H1 (cell line): ENCODE measurements at regions of chr11 and their contacts with region 1.

Region 1: GRCh38 chr11:113553235-113553634 is 78.0 kb upstream of the DRD2 start:
- DNase-seq: peak in 1 of 2 experiments; percentile 49
- H3K4me3 ChIP-seq: no peak overlapping the region
- H3K27ac ChIP-seq: no peak overlapping the region
- H3K4me1 ChIP-seq: peaks cover 0 to 7% (median 5%) of the 10 kb centered on the region in 4 experiments; a peak in 3 of 7 replicates
- H3K27me3 ChIP-seq: no peaks in the 10 kb centered on the region
- CTCF ChIP-seq: no peak
- EP300 ChIP-seq: no peak
- POLR2A ChIP-seq: no peak
- RAD21 ChIP-seq: no peak

Region 2: GRCh38 chr11:113392236-113392921 is 160.9 kb before region 1 on chr11:
- CTCF ChIA-PET with region 1: no interaction called
- POLR2A ChIA-PET with region 1: no interaction called
- DNase-seq: no peak
- H3K4me3 ChIP-seq: no peak overlapping the region
- H3K27ac ChIP-seq: no peak overlapping the region
- H3K4me1 ChIP-seq: peaks cover 1 to 4% (median 3%) of the 10 kb centered on the region in 4 experiments; a peak in 5 of 7 replicates
- H3K27me3 ChIP-seq: no peaks in the 10 kb centered on the region; a peak in 1 of 7 replicates
- CTCF ChIP-seq: no peak
- EP300 ChIP-seq: no peak
- POLR2A ChIP-seq: no peak
- RAD21 ChIP-seq: no peak

Region 3: GRCh38 chr11:113474362-113475159 is 78.7 kb before region 1 on chr11:
- CTCF ChIA-PET with region 1: no interaction called
- POLR2A ChIA-PET with region 1: no interaction called
- DNase-seq: peak; percentile 79 to 98
- H3K4me3 ChIP-seq: peak overlapping the region; percentile 43 to 61 (median 49)
- H3K27ac ChIP-seq: no peak overlapping the region
- H3K4me1 ChIP-seq: peaks cover 0 to 9% (median 3%) of the 10 kb centered on the region in 4 experiments; a peak in 6 of 7 replicates
- H3K27me3 ChIP-seq: peaks cover 7 to 29% (median 22%) of the 10 kb centered on the region in 4 experiments
- CTCF ChIP-seq: no peak
- EP300 ChIP-seq: no peak
- POLR2A ChIP-seq: no peak
- RAD21 ChIP-seq: peak in 1 of 2 experiments; percentile 18; a peak in 1 of 4 replicates

Region 4: DNA sequence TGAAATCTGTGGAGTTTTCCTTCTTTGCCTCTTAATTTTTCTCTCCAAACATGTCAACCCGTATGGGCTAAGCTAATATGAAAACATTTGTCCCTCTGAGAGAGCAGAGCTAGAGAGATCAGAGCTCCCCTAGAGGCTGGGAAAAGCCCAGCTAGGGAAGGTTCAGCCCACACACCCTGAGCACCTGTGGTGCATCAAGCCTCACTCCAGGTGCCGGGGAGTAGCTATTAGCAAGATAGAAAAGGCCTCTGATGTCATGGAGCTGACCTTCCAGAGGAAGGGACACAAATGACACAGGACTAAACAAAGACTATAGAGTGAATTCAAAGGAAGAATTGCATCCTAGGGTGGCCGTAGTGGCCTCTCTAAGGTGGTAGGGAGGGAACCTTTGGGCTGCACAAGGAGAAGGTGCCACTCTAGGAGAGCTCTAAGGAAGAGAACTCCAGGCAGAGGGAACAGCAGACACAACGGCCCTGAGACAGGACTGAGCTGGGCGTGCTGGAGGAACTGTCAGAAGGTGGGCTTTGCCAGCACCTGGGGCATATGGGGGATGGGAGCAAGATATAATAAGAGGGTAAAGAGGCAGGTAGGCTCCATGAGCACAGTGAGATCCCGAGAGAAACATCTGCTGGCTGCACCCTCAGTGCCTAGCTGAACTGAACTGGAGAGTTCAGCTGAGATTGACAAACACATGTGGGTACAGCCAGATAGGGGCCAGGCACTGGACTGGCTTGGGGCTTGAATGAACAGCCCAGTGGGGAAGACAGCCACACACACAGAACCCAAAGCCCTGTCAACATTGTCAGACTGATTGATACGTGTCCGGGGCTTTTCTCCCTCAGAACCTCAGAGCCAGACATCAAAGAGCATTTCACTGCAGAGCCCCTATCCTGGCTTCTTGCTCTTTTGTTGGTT is 12.6 kb before region 1 on chr11:
- CTCF ChIA-PET with region 1: interaction called, 70 read pairs
- POLR2A ChIA-PET with region 1: no interaction called
- DNase-seq: peak; percentile 39 to 56
- H3K4me3 ChIP-seq: no peak overlapping the region
- H3K27ac ChIP-seq: no peak overlapping the region
- H3K4me1 ChIP-seq: peaks cover 10 to 23% (median 13%) of the 10 kb centered on the region in 4 experiments
- H3K27me3 ChIP-seq: peaks cover 0 to 19% (median 12%) of the 10 kb centered on the region in 4 experiments; a peak in 4 of 7 replicates
- CTCF ChIP-seq: peak; percentile 10 to 61 (median 42); a peak in 3 of 4 replicates
- EP300 ChIP-seq: no peak
- POLR2A ChIP-seq: no peak
- RAD21 ChIP-seq: peak; percentile 6 to 42; a peak in 2 of 4 replicates

Region 5: GRCh38 chr11:113690619-113691569 is 137.7 kb after region 1 on chr11:
- CTCF ChIA-PET with region 1: interaction called, 15 read pairs
- POLR2A ChIA-PET with region 1: no interaction called
- DNase-seq: peak; percentile 17 to 86
- H3K4me3 ChIP-seq: no peak overlapping the region
- H3K27ac ChIP-seq: no peak overlapping the region
- H3K4me1 ChIP-seq: no peaks in the 10 kb centered on the region; a peak in 1 of 7 replicates
- H3K27me3 ChIP-seq: no peaks in the 10 kb centered on the region
- CTCF ChIP-seq: peak; percentile 85 to 97 (median 93)
- EP300 ChIP-seq: no peak
- POLR2A ChIP-seq: no peak
- RAD21 ChIP-seq: peak; percentile 82 to 86